Mucosa of descending colon (tissue), 3 donors: ENCODE measurements at regions of chr18 and their contacts with region 1.

Region 1: DNA sequence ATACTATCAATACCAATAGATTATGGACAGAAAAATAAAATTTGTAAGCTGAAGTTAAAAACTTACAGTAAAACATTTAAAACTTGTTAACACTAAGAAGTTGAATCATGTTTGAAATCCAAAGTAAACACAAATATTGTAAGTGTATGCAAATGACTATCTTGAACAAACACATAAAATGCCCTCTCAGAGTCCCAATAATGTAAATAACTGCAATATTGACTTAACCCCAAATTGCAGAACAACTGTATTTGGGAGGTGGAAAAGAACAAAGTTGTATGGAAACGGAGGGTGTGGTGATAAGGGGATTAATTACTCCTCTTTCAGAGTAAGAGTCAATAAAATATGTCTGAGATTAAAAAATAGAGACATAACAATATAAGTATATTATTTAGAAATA is 140.0 kb upstream of the NOL4 start:
- DNase-seq: no peak
- ATAC-seq: no peak
- H3K4me3 ChIP-seq: no peak overlapping the region
- H3K4me1 ChIP-seq: no peaks in the 10 kb centered on the region
- CTCF ChIP-seq: no peak

Region 2: GRCh38 chr18:34159691-34160185 is 205.0 kb before region 1 on chr18:
- intact Hi-C with region 1: loop called in 1 of 2 experiments (anchors 10 kb)
- DNase-seq: peak in 1 of 3 donors; percentile 28
- ATAC-seq: no peak
- H3K4me3 ChIP-seq: no peak overlapping the region
- H3K4me1 ChIP-seq: no peaks in the 10 kb centered on the region
- CTCF ChIP-seq: no peak